PC-3 (cell line): ENCODE measurements at regions of chr5 and their contacts with region 1.

Region 1: GRCh38 chr5:59587489-59588337 is 305.8 kb downstream of the PDE4D start:
- DNase-seq: peak; percentile 54
- ATAC-seq: peak; percentile 80
- H3K4me3 ChIP-seq: peak overlapping the region; percentile 63
- H3K27ac ChIP-seq: peak overlapping the region; percentile 54
- H3K4me1 ChIP-seq: peaks cover 33% of the 10 kb centered on the region
- H3K27me3 ChIP-seq: no peaks in the 10 kb centered on the region
- CTCF ChIP-seq: no peak; the same call in 1 of the 2 replicates

Region 2: GRCh38 chr5:59517926-59518585 is 69.7 kb before region 1 on chr5:
- CTCF ChIA-PET with region 1: no interaction called
- POLR2A ChIA-PET with region 1: no interaction called
- intact Hi-C with region 1: loop called (anchors 5 kb)
- DNase-seq: peak; percentile 78
- ATAC-seq: peak; percentile 95
- H3K4me3 ChIP-seq: peak overlapping the region; percentile 48; the same call in 1 of the 2 replicates
- H3K27ac ChIP-seq: peak overlapping the region; percentile 88
- H3K4me1 ChIP-seq: peaks cover 39% of the 10 kb centered on the region
- H3K27me3 ChIP-seq: no peaks in the 10 kb centered on the region
- CTCF ChIP-seq: no peak

Region 3: DNA sequence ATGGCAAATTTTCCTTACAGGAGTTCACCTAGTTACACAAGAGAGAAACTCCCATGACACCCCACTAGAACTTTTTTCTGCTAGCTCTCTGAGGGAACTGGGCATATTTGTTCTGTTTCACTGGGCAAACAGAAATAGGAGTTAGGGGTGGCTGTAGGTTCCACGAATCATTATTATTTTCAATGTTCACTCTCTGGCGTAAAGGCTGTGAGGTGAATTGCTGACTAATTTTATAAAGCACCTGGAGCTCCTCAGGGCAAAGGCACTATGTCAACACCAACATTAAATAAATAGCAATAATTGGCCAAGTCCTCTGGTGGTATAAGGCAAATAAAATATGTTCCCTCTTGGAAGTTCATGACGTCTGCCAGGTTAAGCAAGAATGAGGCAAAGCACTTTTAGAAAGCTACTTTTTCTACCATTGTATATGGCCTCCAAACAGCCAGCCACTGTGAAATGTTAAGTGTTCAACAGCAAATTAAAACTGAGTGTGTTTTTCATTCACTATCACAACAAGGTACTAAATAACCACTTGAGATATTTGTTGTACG is 38.8 kb before region 1 on chr5:
- CTCF ChIA-PET with region 1: interaction called, 3 read pairs
- POLR2A ChIA-PET with region 1: no interaction called
- intact Hi-C with region 1: loop called (anchors 5 kb)
- DNase-seq: peak; percentile 79
- ATAC-seq: peak; percentile 99
- H3K4me3 ChIP-seq: no peak overlapping the region
- H3K27ac ChIP-seq: peak overlapping the region; percentile 90
- H3K4me1 ChIP-seq: peaks cover 20% of the 10 kb centered on the region
- H3K27me3 ChIP-seq: no peaks in the 10 kb centered on the region
- CTCF ChIP-seq: no peak

Region 4: DNA sequence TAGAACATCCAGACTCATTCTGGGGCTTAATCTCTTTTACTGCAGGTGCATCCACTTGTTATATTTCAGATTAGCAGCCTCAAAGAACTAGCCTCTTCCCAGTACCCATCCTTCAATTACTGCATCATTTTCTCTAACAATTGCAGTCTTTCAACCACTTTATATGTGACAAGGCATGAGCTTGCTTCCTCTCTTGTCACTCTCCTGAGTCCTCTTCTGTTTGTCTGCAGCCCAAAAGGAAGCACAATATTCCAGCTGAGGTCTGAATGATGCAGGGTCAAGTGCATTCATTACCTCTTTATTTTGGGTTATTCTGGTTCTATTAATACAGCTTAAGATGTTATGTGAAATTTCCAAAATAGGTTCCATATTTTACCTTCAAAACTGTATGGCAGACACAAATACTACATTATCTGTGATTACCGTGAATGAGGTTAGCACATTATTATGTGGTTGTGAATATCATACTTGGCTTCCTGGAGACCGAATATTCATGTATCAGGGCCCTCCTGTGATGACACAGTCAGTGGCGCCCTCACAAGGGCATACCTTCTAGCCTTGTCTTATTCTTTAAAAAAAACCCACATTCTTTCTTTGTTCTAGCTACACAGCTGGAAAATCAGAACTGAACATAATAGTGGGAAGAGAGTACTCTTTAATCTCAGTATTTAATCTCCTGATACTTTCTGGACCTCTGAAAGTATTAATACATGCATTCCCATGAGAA is 17.9 kb before region 1 on chr5:
- CTCF ChIA-PET with region 1: no interaction called
- POLR2A ChIA-PET with region 1: no interaction called
- intact Hi-C with region 1: loop called (anchors 1 kb)
- DNase-seq: no peak
- ATAC-seq: peak; percentile 29
- H3K4me3 ChIP-seq: no peak overlapping the region
- H3K27ac ChIP-seq: no peak overlapping the region
- H3K4me1 ChIP-seq: peaks cover 16% of the 10 kb centered on the region; the same call in 1 of the 2 replicates
- H3K27me3 ChIP-seq: no peaks in the 10 kb centered on the region
- CTCF ChIP-seq: no peak

Region 5: DNA sequence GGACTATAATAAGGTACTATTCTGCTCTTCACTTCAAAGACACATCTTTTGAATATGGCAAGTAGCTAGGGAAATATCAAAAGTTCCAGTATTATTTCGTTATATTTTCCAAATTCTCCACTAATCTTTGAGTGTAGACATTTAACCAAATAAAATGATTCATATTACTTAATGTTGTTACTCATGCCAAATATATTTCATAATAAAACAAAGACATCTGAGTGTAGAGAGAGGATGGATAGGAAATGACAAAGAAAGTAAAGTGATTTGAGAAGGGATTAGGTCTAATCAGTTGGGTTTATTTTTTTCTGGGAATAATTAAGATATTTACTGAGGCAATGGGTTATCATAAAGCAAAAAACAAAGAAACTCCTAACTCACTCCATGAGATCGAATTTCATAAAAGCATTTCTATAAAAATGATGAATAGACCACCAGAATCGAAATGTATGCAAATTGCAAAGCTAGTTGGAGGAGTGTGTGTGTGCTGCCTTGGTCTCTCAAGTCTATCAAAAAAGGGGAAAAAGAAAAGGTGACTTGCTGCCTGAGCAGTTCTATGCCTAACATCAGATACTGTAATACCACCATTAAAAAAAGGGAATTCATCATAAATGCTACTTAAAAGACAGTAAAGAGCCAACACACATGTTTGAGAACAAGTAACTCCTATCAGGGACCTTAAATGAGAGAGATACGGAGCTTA is 50.3 kb after region 1 on chr5:
- CTCF ChIA-PET with region 1: no interaction called
- POLR2A ChIA-PET with region 1: no interaction called
- intact Hi-C with region 1: loop called (anchors 2 kb)
- DNase-seq: peak; percentile 49
- ATAC-seq: peak; percentile 86
- H3K4me3 ChIP-seq: no peak overlapping the region
- H3K27ac ChIP-seq: peak overlapping the region; percentile 65
- H3K4me1 ChIP-seq: peaks cover 22% of the 10 kb centered on the region
- H3K27me3 ChIP-seq: no peaks in the 10 kb centered on the region
- CTCF ChIP-seq: no peak

Region 6: GRCh38 chr5:59660737-59661136 is 73.0 kb after region 1 on chr5:
- CTCF ChIA-PET with region 1: interaction called, 4 read pairs
- POLR2A ChIA-PET with region 1: interaction called, 3 read pairs
- intact Hi-C with region 1: loop called (anchors 2 kb)
- DNase-seq: peak; percentile 53
- ATAC-seq: peak; percentile 45; the same call in 1 of the 2 replicates
- H3K4me3 ChIP-seq: no peak overlapping the region
- H3K27ac ChIP-seq: no peak overlapping the region
- H3K4me1 ChIP-seq: peaks cover 23% of the 10 kb centered on the region
- H3K27me3 ChIP-seq: no peaks in the 10 kb centered on the region
- CTCF ChIP-seq: peak; percentile 55